Left cardiac atrium (tissue), 4 donors: ENCODE measurements at regions of chr12 and their contacts with region 1.

Region 1: GRCh38 chr12:89019408-89020120 is 332.7 kb downstream of the DUSP6 start:
- DNase-seq: peak; percentile 71
- ATAC-seq: peak; percentile 96 to 97

Region 2: DNA sequence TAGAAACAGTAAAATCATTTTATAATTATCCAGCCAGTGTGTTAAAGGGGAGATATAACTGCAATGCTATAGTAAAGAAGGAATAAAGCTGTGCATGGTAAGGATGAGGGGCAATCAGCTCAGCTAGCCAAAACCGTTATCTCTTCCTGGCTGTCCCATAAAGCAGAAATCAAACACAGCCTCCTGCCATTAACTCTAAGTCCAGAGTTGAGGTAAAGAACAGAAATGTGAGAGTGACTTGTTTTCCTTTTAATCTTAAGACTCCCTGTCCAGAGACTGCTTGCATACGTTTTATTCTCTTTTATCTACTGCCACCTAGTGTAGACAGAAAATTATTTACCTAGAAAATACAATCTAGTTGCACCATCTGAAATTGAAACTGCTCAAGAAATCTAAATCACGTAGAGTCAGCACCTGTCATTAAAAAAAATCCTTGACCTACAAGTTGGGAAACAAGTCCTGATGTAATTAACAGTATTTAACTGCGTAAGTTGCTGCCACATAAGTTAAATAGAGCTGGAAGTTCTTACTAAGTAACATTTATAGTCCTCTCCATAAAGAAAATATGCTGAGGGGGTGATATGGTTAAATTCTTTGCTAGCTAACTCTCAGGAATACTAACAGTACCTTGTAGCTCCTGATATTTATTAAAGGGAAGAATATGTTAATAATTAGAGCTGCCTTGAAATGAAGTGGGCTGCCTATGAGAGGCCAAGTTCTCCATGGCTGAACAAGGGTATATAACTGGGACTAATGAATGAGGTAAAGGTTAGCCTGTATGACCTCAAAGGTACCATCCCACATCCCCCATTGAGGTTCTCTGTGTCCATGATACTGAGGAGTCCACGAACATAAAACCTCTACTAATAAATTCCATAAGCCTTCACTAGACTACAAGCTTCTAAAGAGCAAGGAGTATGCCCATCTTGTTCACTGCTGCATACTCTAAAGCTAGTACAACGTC is 442.4 kb after region 1 on chr12:
- intact Hi-C with region 1: loop called in 1 of 2 experiments (anchors 1 kb)
- DNase-seq: no peak
- ATAC-seq: peak; percentile 90 to 93

Region 3: GRCh38 chr12:89524541-89525285 is 505.1 kb after region 1 on chr12 and contains the start of gene GALNT4:
- intact Hi-C with region 1: loop called (anchors 2 to 5 kb)
- DNase-seq: peak; percentile 89
- ATAC-seq: peak; percentile 94 to 95
- total RNA-seq, gene GALNT4: 4.2 to 4.3 TPM